ENCODE measurements at regions of chr16 and their contacts with region 1.

Region 1: GRCh38 chr16:84970447-84971127 is 40.7 kb downstream of the ZDHHC7 start:
- DNase-seq: peak; percentile 82 to 89
- ATAC-seq: peak; percentile 85 to 94
- H3K4me3 ChIP-seq: no peak overlapping the region
- H3K27ac ChIP-seq: peak overlapping the region; percentile 18 to 82; a peak in 5 of 6 replicates
- H3K4me1 ChIP-seq: peaks cover 15% of the 10 kb centered on the region
- CTCF ChIP-seq: peak; percentile 94
- EP300 ChIP-seq: no peak
- POLR2A ChIP-seq: no peak
- RAD21 ChIP-seq: peak; percentile 95

Region 2: DNA sequence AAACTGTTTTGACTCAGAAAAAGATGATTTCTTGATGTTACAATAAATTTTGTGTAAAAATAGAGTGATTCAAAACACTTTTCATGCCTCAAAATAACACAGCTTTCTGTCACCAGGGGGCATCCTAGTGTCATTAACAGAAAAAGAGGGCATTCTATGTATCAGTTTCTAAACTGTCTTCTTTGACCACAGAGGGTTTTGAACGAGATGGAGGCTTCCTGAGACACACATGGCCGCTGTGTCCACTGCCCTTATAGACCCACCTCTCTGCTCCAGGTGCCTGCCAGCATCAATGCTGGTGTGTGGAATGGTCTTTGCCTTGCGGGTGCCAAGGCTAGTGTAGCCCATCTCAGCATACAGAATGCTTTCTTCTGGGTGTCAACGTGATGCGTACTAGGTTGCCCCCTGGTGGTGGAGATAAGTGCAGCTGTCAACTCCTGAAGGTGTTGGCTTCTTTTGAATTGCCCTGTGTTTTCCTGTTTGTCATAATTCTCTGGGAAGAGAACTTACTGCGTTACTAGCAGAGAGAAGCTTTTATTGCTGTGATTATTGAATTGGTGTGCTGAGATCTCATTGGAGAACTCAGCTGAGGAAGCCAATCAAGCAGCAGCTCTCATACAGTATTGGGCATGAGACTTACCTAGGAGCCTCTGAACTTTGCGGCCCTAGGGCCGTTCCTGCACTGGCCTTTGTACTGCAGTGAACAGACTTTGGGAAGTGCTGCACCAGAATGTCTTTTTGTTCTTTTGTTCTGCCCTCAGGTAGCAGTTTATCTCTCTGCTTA is 232.1 kb before region 1 on chr16:
- CTCF ChIA-PET with region 1: interaction called, 91 read pairs
- POLR2A ChIA-PET with region 1: no interaction called
- DNase-seq: peak; percentile 84 to 86
- ATAC-seq: peak; percentile 91
- H3K4me3 ChIP-seq: no peak overlapping the region
- H3K27ac ChIP-seq: no peak overlapping the region; a peak in 1 of 6 replicates
- H3K4me1 ChIP-seq: peaks cover 79% of the 10 kb centered on the region
- CTCF ChIP-seq: peak; percentile 95
- EP300 ChIP-seq: no peak
- POLR2A ChIP-seq: no peak
- RAD21 ChIP-seq: peak; percentile 69 to 70

Region 3: DNA sequence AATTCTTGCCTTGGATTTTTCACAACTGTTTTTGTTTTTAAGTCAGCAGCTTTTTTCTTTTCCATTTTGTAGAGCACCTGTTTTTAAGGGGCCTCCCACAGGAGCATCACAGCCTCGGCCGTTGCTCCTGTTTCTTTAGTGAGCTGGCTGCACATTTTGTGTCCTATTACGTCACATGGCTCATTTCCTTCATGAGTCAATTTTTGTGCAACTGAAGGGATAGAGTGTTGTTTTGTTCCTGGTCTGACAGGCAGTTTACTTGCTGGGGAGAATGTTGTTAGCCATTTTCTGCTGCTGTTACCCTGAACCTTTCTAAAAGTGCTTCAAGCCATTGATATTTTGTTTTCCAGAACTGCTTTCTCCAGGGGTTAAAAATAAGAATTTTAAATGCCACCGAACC is 195.8 kb before region 1 on chr16:
- CTCF ChIA-PET with region 1: interaction called, 18 read pairs
- POLR2A ChIA-PET with region 1: no interaction called
- DNase-seq: no peak
- ATAC-seq: no peak
- H3K4me3 ChIP-seq: no peak overlapping the region
- H3K27ac ChIP-seq: no peak overlapping the region
- H3K4me1 ChIP-seq: no peaks in the 10 kb centered on the region
- CTCF ChIP-seq: no peak
- EP300 ChIP-seq: no peak
- POLR2A ChIP-seq: no peak
- RAD21 ChIP-seq: no peak

Region 4: DNA sequence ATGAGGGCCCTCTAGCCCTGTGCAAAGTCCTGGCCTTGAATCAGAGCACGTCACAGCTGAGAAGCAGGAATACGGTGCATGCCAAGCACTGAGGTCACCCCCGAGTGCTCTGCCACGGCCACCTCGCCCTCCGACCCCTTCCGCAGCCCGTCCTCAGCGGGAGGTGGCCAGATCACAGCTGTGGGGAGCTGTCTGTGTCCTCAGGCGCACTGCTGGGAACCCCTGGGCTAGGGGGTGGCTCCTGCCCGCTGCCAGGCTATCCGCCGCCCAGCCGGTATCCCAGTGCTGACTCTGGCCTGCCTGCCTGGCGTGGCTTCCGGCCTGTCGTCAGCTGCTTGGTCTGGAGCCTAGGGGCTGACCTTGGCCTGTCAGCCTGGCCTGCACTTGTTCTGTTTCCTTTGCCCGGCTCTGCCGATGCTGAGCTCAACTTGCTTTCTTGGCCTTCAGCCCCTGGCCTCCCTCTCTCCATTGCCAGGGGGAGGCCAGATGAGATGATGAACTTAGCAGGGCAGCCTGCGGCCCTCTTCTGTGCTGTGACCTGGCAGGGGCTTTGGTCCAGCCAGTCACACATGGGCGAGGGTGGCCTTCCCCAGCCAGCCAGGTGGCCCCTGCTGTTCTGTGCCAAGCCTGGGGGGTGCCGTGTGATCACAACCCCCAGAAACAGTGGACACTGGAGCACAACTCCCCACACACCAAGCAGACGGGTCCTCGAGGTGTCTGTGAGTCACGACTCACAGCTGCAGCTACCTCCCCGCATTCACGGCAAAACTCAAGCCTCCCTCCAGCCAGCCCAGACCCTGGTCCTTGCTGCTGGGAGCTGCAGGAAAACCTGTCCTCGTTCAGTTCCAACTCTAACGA is 36.6 kb before region 1 on chr16:
- CTCF ChIA-PET with region 1: interaction called, 69 read pairs
- POLR2A ChIA-PET with region 1: no interaction called
- DNase-seq: no peak
- ATAC-seq: no peak
- H3K4me3 ChIP-seq: no peak overlapping the region
- H3K27ac ChIP-seq: no peak overlapping the region
- H3K4me1 ChIP-seq: peaks cover 1% of the 10 kb centered on the region; the same call in 1 of the 3 replicates
- CTCF ChIP-seq: no peak
- EP300 ChIP-seq: no peak
- POLR2A ChIP-seq: no peak
- RAD21 ChIP-seq: no peak

Region 5: DNA sequence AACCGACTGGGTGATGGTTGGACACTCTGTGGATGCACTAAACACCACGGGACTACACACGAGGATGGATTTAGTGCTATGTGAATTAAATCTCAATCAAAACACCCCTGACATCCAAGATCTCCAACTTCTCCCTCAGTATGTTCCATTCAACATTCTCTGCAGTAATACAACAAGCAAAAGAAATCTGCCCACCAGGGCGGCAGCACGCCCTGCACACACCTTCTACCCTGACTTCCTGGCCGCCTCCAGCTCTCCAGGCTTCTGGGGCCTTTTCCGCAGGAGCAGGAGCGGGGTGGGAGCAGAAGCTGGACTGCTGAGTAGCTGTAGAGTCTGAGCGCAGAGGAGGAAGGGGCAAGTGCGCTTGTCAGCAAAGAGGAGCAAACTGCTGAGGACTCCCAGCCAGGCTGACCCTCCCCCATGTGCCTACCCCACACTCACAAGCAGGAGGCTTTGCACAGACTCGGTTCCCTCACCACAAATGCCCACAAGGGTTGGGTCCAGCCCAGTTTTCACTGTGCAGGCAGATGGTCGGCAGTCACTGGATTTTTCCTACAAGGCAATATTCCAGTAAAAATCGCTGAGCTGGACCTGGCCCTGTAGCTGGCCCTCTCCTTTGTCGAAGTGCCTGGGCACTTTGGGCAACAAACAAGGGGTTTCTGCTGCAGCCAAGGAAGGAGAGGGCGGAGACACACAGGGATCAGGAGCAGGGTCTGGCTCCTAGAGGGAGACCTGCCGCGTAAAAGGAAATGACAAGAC is 17.9 kb after region 1 on chr16:
- CTCF ChIA-PET with region 1: interaction called, 49 read pairs
- POLR2A ChIA-PET with region 1: interaction called, 7 read pairs
- DNase-seq: no peak
- ATAC-seq: peak; percentile 25 to 51; a peak in 3 of 6 replicates
- H3K4me3 ChIP-seq: no peak overlapping the region
- H3K27ac ChIP-seq: peak overlapping the region in 1 of 2 experiments; percentile 29; a peak in 2 of 6 replicates
- H3K4me1 ChIP-seq: peaks cover 29% of the 10 kb centered on the region
- CTCF ChIP-seq: no peak
- EP300 ChIP-seq: no peak
- POLR2A ChIP-seq: no peak
- RAD21 ChIP-seq: no peak

Region 6: DNA sequence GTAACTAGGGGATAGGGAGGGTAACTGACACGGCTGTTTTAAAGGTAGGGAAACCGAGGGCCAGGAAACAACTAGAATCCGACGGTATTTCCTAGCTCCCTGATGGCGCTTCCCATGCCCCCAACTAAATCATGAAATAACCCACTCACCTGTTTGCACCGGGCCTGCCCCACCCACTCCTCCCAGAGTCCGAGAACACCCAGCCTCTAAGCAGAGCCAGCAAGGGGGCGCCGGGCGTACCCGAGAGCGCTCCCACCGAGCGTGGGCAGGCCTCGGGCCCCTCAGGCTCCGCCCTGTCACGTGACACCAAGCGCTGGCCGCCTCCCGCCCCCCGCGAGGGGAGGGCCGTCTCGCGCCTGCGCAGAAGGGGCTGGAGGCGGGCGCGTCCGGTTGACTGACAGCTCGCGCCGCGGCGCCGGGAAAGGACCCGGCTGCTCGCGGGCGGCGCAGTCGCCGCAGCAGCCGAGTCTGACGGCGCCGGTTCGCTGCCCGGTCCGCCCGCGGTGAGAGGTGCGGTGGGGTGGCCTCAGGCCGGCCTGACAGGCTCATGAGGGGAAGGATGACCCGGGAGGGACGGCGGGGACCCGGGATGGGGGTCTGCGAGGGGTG is 56.9 kb after region 1 on chr16 and contains the start of gene KIAA0513:
- CTCF ChIA-PET with region 1: interaction called, 14 read pairs
- POLR2A ChIA-PET with region 1: interaction called, 4 read pairs
- DNase-seq: peak; percentile 86 to 92
- ATAC-seq: peak; percentile 91 to 92
- H3K4me3 ChIP-seq: peak within 1 kb of the TSS; percentile 85
- H3K27ac ChIP-seq: peak within 1 kb of the TSS; percentile 75 to 92
- H3K4me1 ChIP-seq: peaks cover 31% of the 10 kb centered on the region
- CTCF ChIP-seq: no peak; the same call in 2 of the 3 replicates
- EP300 ChIP-seq: no peak
- POLR2A ChIP-seq: peak; percentile 80
- RAD21 ChIP-seq: no peak
- polyA plus RNA-seq, gene KIAA0513: 1.5 and 1.8 TPM in 2 replicates

Region 7: GRCh38 chr16:85253084-85253941 is 282.7 kb after region 1 on chr16:
- CTCF ChIA-PET with region 1: no interaction called
- POLR2A ChIA-PET with region 1: no interaction called
- DNase-seq: peak; percentile 51 to 85
- ATAC-seq: peak; percentile 81 to 96
- H3K4me3 ChIP-seq: no peak overlapping the region
- H3K27ac ChIP-seq: no peak overlapping the region
- H3K4me1 ChIP-seq: no peaks in the 10 kb centered on the region
- CTCF ChIP-seq: peak; percentile 86
- EP300 ChIP-seq: no peak
- POLR2A ChIP-seq: no peak
- RAD21 ChIP-seq: peak; percentile 41 to 46; a peak in 3 of 5 replicates

Measured in A549 (cell line).